Breast epithelium (tissue), 4 donors: ENCODE measurements at regions of chr10 and their contacts with region 1.

Region 1: GRCh38 chr10:59976909-59977308 is 70.6 kb upstream of the CCDC6 start:
- DNase-seq: no peak
- H3K4me3 ChIP-seq: no peak overlapping the region
- H3K27ac ChIP-seq: no peak overlapping the region
- H3K4me1 ChIP-seq: no peaks in the 10 kb centered on the region
- H3K27me3 ChIP-seq: no peaks in the 10 kb centered on the region
- CTCF ChIP-seq: no peak
- POLR2A ChIP-seq: no peak

Region 2: GRCh38 chr10:60155943-60156683 is 179.2 kb after region 1 on chr10:
- intact Hi-C with region 1: loop called (anchors 5 kb)
- DNase-seq: no peak
- H3K4me3 ChIP-seq: no peak overlapping the region
- H3K27ac ChIP-seq: no peak overlapping the region
- H3K4me1 ChIP-seq: no peaks in the 10 kb centered on the region
- H3K27me3 ChIP-seq: no peaks in the 10 kb centered on the region
- CTCF ChIP-seq: no peak
- POLR2A ChIP-seq: no peak